CD8-positive, alpha-beta T cell (primary cell): ENCODE measurements at regions of chr11 and their contacts with region 1.

Region 1: DNA sequence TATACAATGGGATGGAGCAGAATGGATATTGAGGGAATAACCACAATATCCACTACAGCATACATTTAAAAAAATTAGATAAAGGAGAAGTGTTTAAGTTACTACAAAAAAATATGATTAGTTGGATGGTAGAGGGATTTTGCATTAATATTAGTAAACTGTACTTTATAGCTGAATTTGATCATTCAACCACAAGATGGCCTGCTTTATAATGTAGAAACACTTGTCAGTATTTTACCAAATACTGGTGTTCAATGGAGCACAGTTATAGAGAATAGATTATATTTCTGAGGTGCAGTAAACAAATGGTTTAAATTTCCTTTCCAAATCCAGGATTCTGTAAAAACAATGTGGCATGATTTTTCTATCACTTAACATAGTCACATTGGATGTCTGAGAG is 818.8 kb upstream of the CHORDC1 start:
- DNase-seq: no peak
- ATAC-seq: no peak
- H3K4me3 ChIP-seq: no peak overlapping the region
- H3K4me3 Mint-ChIP-seq: no peak overlapping the region
- H3K27ac ChIP-seq: no peak overlapping the region
- H3K27ac Mint-ChIP-seq: no peak overlapping the region
- H3K4me1 ChIP-seq: no peaks in the 10 kb centered on the region
- H3K4me1 Mint-ChIP-seq: no peaks in the 10 kb centered on the region
- H3K27me3 ChIP-seq: no peaks in the 10 kb centered on the region
- H3K27me3 Mint-ChIP-seq: no peaks in the 10 kb centered on the region
- CTCF ChIP-seq: no peak

Region 2: GRCh38 chr11:90916706-90917105 is 124.9 kb before region 1 on chr11:
- CTCF ChIA-PET with region 1: no interaction called
- POLR2A ChIA-PET with region 1: no interaction called
- intact Hi-C with region 1: no loop called
- DNase-seq: no peak
- ATAC-seq: no peak
- H3K4me3 ChIP-seq: no peak overlapping the region
- H3K4me3 Mint-ChIP-seq: no peak overlapping the region
- H3K27ac ChIP-seq: no peak overlapping the region
- H3K27ac Mint-ChIP-seq: no peak overlapping the region
- H3K4me1 ChIP-seq: no peaks in the 10 kb centered on the region
- H3K4me1 Mint-ChIP-seq: no peaks in the 10 kb centered on the region
- H3K27me3 ChIP-seq: no peaks in the 10 kb centered on the region
- H3K27me3 Mint-ChIP-seq: no peaks in the 10 kb centered on the region
- CTCF ChIP-seq: no peak

Region 3: GRCh38 chr11:91078221-91078620 is 36.6 kb after region 1 on chr11:
- CTCF ChIA-PET with region 1: no interaction called
- POLR2A ChIA-PET with region 1: no interaction called
- intact Hi-C with region 1: loop called in 1 of 2 experiments (anchors 5 kb)
- DNase-seq: no peak
- ATAC-seq: no peak
- H3K4me3 ChIP-seq: no peak overlapping the region
- H3K4me3 Mint-ChIP-seq: no peak overlapping the region
- H3K27ac ChIP-seq: no peak overlapping the region
- H3K27ac Mint-ChIP-seq: no peak overlapping the region
- H3K4me1 ChIP-seq: no peaks in the 10 kb centered on the region
- H3K4me1 Mint-ChIP-seq: no peaks in the 10 kb centered on the region
- H3K27me3 ChIP-seq: no peaks in the 10 kb centered on the region
- H3K27me3 Mint-ChIP-seq: no peaks in the 10 kb centered on the region
- CTCF ChIP-seq: no peak